ENCODE measurements at regions of chr14 and their contacts with region 1.

Region 1: GRCh38 chr14:74881431-74882361 is at the start of gene DLST:
- DNase-seq: peak; percentile 84
- H3K4me3 Mint-ChIP-seq: peak within 1 kb of the TSS; percentile 100
- H3K27ac Mint-ChIP-seq: peak within 1 kb of the TSS; percentile 99
- H3K4me1 Mint-ChIP-seq: peaks cover 52% of the 10 kb centered on the region
- H3K27me3 Mint-ChIP-seq: no peaks in the 10 kb centered on the region
- total RNA-seq, gene DLST: 98.9 and 107 TPM in 2 replicates

Region 2: GRCh38 chr14:74302634-74303577 is 578.8 kb before region 1 on chr14 and contains the start of gene ABCD4:
- intact Hi-C with region 1: loop called (anchors 5 kb)
- DNase-seq: peak; percentile 79
- H3K4me3 Mint-ChIP-seq: peak within 1 kb of the TSS; percentile 99
- H3K27ac Mint-ChIP-seq: peak within 1 kb of the TSS; percentile 86
- H3K4me1 Mint-ChIP-seq: peaks cover 22% of the 10 kb centered on the region
- H3K27me3 Mint-ChIP-seq: no peaks in the 10 kb centered on the region
- total RNA-seq, gene ABCD4: 38.8 and 44.4 TPM in 2 replicates

Region 3: DNA sequence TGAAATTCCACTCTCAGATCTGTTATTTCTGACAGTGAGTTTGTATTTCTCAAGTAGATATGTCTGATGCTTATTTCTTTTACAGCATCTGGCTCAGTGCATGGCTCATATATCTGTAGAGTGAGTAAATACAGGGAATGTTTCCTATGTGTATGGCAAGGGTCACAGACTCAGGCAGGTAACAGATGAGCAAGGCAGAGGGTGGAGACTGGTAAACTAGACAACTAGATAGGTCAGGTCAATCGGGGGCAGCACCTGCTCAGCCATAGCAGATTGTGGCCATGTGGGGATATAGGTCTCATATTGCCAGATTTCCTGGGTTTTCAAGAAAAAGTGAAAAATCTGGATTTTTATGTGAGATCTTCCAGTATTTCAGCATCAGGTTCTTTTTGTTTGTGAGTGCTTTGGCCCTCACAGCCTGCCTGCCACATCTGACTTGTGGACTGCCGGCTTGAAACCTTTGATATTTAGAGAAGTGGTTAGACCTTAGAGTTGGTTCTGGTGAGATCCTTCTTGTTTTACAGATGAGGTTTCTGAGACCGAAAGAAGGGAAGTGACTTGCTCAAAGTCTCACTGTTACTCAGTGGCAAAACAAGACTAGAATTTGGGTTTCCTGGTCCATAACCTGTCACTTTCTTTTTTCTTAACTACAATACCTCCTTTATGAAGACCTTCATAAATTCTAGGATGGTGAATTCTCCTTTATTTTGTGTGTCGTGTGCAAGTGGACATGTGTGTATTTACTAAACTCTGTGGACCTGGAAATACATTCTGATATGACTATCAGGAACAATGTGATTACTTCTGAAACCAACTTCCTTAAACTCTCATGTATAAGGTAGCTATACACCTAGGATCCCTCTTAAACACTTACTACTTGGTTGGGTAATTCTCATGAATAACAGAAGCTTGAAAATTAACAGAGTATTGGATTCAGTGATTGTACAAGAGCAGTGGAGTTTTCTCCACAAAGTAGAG is 40.2 kb before region 1 on chr14:
- intact Hi-C with region 1: loop called (anchors 2 kb)
- DNase-seq: peak; percentile 30
- H3K4me3 Mint-ChIP-seq: peak overlapping the region; percentile 72
- H3K27ac Mint-ChIP-seq: peak overlapping the region; percentile 92
- H3K4me1 Mint-ChIP-seq: peaks cover 60% of the 10 kb centered on the region
- H3K27me3 Mint-ChIP-seq: no peaks in the 10 kb centered on the region

Region 4: GRCh38 chr14:74905375-74906142 is 23.9 kb after region 1 on chr14:
- intact Hi-C with region 1: loop called (anchors 1 kb)
- DNase-seq: peak; percentile 61
- H3K4me3 Mint-ChIP-seq: no peak overlapping the region
- H3K27ac Mint-ChIP-seq: peak overlapping the region; percentile 40
- H3K4me1 Mint-ChIP-seq: peaks cover 5% of the 10 kb centered on the region
- H3K27me3 Mint-ChIP-seq: no peaks in the 10 kb centered on the region

Region 5: DNA sequence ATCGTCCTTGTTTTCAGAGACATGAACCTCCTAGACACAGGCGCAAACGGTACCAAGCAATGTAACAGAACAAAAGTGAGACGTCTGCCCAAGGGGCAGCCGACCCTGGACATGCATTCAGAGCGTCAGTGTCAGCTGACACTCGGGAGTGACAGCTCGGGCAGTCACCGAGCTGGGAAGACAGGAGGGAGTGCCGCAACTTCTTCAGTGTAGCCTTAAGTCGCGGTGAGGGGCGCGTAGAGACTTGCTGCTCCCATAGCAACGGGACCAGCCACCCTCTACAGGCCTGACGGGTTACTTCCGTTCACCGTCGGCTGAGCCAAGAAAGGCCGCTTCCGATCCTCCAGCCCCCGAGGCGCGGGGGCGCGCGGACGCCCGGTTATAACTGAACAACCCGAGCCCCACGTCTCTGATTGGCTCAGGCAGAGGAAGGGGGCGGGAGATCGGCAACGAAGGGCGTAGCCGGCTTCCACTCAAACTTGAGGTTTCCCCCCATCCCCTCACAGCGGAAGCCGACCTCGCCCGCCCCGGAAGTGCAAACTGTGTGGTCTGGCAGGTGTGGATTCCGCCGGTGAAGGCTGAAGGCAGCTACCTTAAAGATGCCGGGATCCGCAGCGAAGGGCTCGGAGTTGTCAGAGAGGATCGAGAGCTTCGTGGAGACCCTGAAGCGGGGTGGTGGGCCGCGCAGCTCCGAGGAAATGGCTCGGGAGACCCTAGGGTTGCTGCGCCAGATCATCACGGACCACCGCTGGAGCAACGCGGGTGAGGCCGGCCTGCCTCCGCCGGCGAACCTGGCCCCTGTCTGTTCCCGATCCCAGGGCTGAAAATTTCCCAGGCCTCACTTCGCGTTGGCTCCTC is 120.9 kb after region 1 on chr14 and contains the start of gene EIF2B2:
- intact Hi-C with region 1: loop called (anchors 1 kb)
- DNase-seq: peak; percentile 99
- H3K4me3 Mint-ChIP-seq: peak within 1 kb of the TSS; percentile 98
- H3K27ac Mint-ChIP-seq: peak within 1 kb of the TSS; percentile 92
- H3K4me1 Mint-ChIP-seq: peaks cover 54% of the 10 kb centered on the region
- H3K27me3 Mint-ChIP-seq: peaks cover 10% of the 10 kb centered on the region
- total RNA-seq, gene EIF2B2: 52.8 and 54.3 TPM in 2 replicates

Region 6: DNA sequence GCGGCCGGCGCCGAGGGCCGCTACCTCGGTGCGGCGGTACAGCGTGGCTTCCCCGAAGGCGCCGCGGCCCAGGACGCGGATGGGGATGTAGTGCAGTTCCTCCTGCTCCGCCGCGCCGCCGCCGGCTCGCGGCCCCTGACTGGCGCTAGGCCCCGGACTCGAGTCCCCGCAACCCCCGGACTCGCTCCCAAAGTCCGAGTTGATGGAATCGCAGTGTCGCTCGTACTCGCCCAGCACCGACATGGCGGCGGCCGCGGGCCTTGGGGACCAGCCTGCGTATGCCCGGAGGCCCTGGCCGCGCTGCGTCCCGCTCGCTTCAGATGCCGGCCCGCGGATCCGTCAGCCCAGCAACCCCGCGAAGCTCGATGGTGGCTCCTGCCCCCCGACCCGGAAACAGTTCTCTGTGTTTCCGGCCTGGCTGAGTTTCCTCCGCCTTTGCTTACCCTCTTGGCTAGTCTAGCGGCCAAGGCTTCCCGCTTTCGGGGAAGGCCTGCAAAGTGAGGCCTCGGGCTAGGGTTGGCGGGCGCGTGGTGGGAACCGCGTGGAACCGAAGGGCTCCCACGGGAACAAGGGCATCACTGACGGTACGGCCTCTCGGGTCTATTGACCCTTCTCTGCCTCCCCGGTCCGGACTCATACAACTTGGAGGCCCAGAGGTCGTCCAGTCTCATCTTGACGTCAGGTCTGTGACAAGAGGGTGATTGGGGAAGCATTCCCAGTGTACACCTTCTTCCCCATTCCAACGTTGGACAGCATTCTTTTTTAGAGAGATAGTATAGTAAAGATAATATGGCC is 245.2 kb after region 1 on chr14 and contains the start of gene NEK9:
- intact Hi-C with region 1: loop called (anchors 2 kb)
- DNase-seq: peak; percentile 86
- H3K4me3 Mint-ChIP-seq: peak within 1 kb of the TSS; percentile 93
- H3K27ac Mint-ChIP-seq: peak within 1 kb of the TSS; percentile 97
- H3K4me1 Mint-ChIP-seq: peaks cover 39% of the 10 kb centered on the region
- H3K27me3 Mint-ChIP-seq: no peaks in the 10 kb centered on the region
- total RNA-seq, gene NEK9: 76.8 and 77.0 TPM in 2 replicates

Measured in activated T-helper 1 cell treated with anti-CD3 and anti-CD28 coated beads, Interleukin-12 subunit alpha, Interleukin-12 subunit beta, Interleukin-2, Interleukin-4 antibody, amounts not matched to agents 30 ng/mL and 10 ng/mL and 1 ng/mL, durations not matched to agents 14 hours and 24 hours and 36 hours (primary cell).